ENCODE measurements at regions of chr10 and their contacts with region 1.

Region 1: DNA sequence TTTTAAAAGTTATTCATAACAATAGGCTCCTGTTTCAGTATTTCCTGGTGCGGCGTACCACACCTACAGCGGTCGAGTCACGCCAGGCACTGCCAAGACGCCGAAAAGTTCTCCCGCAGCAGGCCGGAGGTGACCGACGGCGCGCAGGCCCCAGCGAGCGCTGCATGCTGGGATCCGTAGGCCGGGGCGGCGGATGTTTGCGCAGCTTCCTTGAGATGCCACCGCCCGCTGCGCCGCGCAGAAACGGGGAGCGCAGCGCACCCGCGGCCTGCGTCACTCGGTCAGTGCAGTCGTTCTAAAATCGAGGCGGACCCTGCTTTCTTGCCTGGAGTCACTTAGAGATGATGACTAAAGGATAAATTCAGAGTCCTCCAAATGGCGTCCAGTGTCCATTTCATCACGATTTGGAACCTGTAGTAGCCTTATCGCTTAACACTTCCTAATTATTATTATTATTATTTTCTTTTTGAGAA is 1.3 kb upstream of the KIF11 start:
- DNase-seq: peak; percentile 83 to 87
- H3K4me3 ChIP-seq: peak overlapping the region; percentile 93
- H3K27ac ChIP-seq: peak overlapping the region; percentile 97
- H3K4me1 ChIP-seq: peaks cover 33% of the 10 kb centered on the region
- H3K27me3 ChIP-seq: no peaks in the 10 kb centered on the region
- CTCF ChIP-seq: no peak

Region 2: DNA sequence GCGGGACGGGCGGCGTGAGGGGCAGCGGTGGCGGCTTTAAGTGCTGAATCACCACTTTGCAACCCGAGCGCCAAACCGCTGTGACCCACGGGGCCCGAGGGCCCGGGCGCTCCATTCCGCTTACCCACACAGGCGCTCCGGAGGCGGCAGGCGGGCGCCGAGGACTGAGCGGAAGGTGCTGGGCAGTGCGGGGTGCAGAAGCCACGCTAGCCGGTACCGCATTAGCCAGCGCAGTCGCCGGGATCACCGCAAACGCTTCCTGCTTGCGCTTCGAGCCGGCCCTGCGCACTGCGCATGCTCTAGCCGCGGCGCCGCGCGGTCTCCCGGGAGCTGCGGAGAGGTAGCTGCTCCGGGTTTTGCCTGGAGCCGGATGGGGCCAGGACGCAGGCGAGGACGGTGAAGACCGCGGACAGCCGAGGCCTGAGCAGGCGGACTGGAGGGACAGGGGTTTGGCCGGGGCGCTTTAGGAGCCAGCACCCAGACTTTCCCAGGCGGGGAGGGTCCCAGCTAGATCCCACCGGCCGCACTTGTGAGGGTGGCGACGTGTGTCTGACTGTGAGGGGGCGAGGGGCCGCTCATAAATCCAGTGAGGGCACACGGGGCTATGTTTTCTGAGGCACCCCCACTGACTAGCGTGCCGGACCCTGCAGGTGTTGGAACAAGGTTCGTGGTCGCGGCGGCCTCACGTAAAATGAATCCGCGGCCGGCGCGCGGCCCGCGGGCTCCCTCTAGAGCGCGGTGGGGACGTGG is 17.6 kb before region 1 on chr10 and contains the start of gene IDE:
- CTCF ChIA-PET with region 1: no interaction called
- POLR2A ChIA-PET with region 1: no interaction called
- intact Hi-C with region 1: loop called (anchors 2 kb)
- DNase-seq: peak; percentile 58 to 81
- H3K4me3 ChIP-seq: peak within 1 kb of the TSS; percentile 93
- H3K27ac ChIP-seq: peak within 1 kb of the TSS; percentile 83
- H3K4me1 ChIP-seq: peaks cover 28% of the 10 kb centered on the region
- H3K27me3 ChIP-seq: no peaks in the 10 kb centered on the region
- CTCF ChIP-seq: peak; percentile 63
- total RNA-seq, gene IDE: 26.5 and 41.2 TPM in 2 replicates